ENCODE measurements at regions of chr7 and their contacts with region 1.

Region 1: GRCh38 chr7:27196287-27196767 is 3.6 kb downstream of the HOXA13 start:
- DNase-seq: peak; percentile 88 to 95
- ATAC-seq: peak; percentile 71
- H3K4me3 ChIP-seq: no peak overlapping the region
- H3K27ac ChIP-seq: no peak overlapping the region
- H3K4me1 ChIP-seq: no peaks in the 10 kb centered on the region
- H3K27me3 ChIP-seq: peaks cover 0 to 2% of the 10 kb centered on the region in 2 donors

Region 2: DNA sequence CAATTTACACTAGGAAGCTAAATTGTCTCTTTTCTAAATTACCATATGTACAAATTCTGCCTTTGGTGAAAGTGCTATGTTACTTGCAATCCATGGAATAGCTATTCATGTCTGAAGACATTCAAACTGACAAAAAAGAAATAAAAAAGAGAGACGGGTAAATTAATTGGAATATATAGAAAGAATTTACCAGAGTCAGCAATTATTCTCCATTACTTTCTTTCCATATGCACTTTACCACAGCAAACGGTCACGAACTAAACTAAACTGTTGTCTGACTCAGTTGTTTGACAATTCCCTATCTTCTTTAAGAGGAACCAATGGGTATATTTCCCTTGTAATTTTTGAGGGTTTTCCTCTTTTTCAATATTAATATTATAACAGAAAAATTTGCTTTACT is 186.3 kb before region 1 on chr7:
- intact Hi-C with region 1: no loop called
- DNase-seq: no peak
- ATAC-seq: no peak
- H3K4me3 ChIP-seq: no peak overlapping the region
- H3K27ac ChIP-seq: no peak overlapping the region
- H3K4me1 ChIP-seq: no peaks in the 10 kb centered on the region
- H3K27me3 ChIP-seq: peaks cover 0 to 2% of the 10 kb centered on the region in 2 donors

Region 3: GRCh38 chr7:27921081-27921836 is 724.9 kb after region 1 on chr7:
- intact Hi-C with region 1: loop called (anchors 5 to 10 kb)
- DNase-seq: no peak
- ATAC-seq: peak; percentile 60
- H3K4me3 ChIP-seq: no peak overlapping the region
- H3K27ac ChIP-seq: no peak overlapping the region
- H3K4me1 ChIP-seq: no peaks in the 10 kb centered on the region
- H3K27me3 ChIP-seq: no peaks in the 10 kb centered on the region

Region 4: GRCh38 chr7:28020302-28020940 is 824.1 kb after region 1 on chr7:
- intact Hi-C with region 1: loop called (anchors 5 kb)
- DNase-seq: peak in 1 of 2 donors; percentile 68
- ATAC-seq: peak; percentile 93
- H3K4me3 ChIP-seq: no peak overlapping the region
- H3K27ac ChIP-seq: no peak overlapping the region
- H3K4me1 ChIP-seq: no peaks in the 10 kb centered on the region
- H3K27me3 ChIP-seq: no peaks in the 10 kb centered on the region

Region 5: DNA sequence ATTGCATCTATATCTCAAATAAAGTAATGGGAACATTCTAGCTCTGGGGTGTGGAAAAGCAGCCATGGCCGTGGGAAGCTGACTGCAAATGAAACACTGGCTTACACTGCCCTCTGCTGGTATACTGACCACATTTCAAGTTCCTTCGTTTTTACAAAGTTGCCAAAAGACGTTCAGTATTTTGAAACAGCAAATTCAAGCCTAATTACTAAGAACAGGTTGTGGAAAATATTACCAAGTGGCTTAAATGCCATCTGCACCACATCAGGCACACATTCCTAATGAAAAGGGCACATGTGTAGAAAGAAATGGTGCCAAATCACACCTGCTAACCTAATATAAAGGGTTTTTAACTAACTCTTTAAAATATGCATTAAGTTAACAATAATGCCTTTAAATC is 900.4 kb after region 1 on chr7:
- intact Hi-C with region 1: loop called (anchors 5 to 10 kb)
- DNase-seq: no peak
- ATAC-seq: peak; percentile 86
- H3K4me3 ChIP-seq: no peak overlapping the region
- H3K27ac ChIP-seq: no peak overlapping the region
- H3K4me1 ChIP-seq: no peaks in the 10 kb centered on the region
- H3K27me3 ChIP-seq: no peaks in the 10 kb centered on the region

Region 6: GRCh38 chr7:28228396-28228795 is 1032.1 kb after region 1 on chr7:
- intact Hi-C with region 1: no loop called
- DNase-seq: no peak
- ATAC-seq: no peak
- H3K4me3 ChIP-seq: no peak overlapping the region
- H3K27ac ChIP-seq: no peak overlapping the region
- H3K4me1 ChIP-seq: no peaks in the 10 kb centered on the region
- H3K27me3 ChIP-seq: no peaks in the 10 kb centered on the region